ENCODE measurements at regions of chr2 and their contacts with region 1.

Region 1: GRCh38 chr2:200901459-200902072 is 12.4 kb downstream of the NIF3L1 start:
- DNase-seq: peak; percentile 71
- H3K4me3 ChIP-seq: no peak overlapping the region
- H3K27ac ChIP-seq: no peak overlapping the region
- H3K4me1 ChIP-seq: no peaks in the 10 kb centered on the region
- H3K27me3 ChIP-seq: no peaks in the 10 kb centered on the region
- CTCF ChIP-seq: peak; percentile 80

Region 2: GRCh38 chr2:200274116-200275075 is 627.2 kb before region 1 on chr2:
- intact Hi-C with region 1: no loop called
- DNase-seq: no peak
- H3K4me3 ChIP-seq: no peak overlapping the region
- H3K27ac ChIP-seq: no peak overlapping the region
- H3K4me1 ChIP-seq: no peaks in the 10 kb centered on the region
- H3K27me3 ChIP-seq: no peaks in the 10 kb centered on the region
- CTCF ChIP-seq: no peak

Region 3: GRCh38 chr2:200703127-200703925 is 198.2 kb before region 1 on chr2:
- intact Hi-C with region 1: no loop called
- DNase-seq: peak; percentile 52
- H3K4me3 ChIP-seq: no peak overlapping the region
- H3K27ac ChIP-seq: no peak overlapping the region
- H3K4me1 ChIP-seq: no peaks in the 10 kb centered on the region
- H3K27me3 ChIP-seq: no peaks in the 10 kb centered on the region
- CTCF ChIP-seq: peak; percentile 38

Region 4: DNA sequence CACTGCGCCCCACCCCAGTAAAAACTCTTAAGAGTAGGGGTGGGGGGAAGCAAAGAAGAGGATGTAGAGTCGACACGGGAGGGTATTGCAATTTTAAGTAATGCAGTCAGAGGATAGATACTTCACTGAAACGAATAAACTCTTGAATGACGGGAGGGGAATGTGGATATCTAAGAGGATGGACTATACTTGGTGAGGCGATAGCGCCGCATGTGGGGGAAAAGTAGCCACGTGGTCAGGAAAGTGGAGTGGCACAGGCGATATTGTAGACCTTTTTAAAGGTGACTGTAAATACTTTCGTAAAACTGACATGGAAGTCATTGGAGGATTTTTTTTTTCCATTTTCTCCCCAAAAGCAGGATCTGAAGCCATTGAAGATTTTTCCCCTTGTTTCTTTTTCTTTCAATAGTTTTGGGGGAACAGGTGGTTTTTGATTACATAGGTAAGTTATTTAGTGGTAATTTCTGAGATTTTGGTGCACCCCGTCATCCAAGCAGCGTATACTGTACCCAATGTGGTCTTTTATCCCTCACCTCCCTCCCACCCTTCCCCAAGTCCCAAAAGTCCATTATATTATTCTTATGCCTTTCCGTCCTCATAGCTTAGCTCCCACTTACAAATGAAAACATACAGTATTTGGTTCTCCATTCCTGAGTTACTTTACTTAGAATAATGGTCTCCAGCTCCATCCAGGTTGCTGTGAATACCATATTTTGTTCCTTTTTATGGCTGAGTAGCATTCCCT is 50.9 kb before region 1 on chr2:
- intact Hi-C with region 1: no loop called
- DNase-seq: no peak
- H3K4me3 ChIP-seq: no peak overlapping the region
- H3K27ac ChIP-seq: no peak overlapping the region
- H3K4me1 ChIP-seq: no peaks in the 10 kb centered on the region
- H3K27me3 ChIP-seq: no peaks in the 10 kb centered on the region
- CTCF ChIP-seq: no peak

Region 5: DNA sequence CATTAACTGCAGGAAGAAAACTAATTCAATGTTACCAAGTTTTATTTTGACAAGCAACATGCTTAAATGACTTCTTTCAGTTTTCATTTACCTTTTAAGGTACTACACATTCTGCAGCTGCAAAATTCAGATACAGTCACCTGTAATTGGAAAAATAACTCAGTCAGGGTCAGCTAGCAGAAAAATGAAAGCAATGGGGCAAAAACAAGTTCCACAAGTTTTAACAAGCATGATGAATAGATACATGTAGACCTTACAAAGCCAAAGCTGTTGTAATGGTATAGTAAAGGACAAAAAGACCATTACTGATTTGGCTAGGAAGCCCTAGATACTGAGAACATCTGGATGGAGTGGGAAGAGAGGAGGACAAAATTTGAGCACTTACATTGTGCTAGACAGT is 57.7 kb after region 1 on chr2:
- intact Hi-C with region 1: loop called (anchors 5 kb)
- DNase-seq: no peak
- H3K4me3 ChIP-seq: no peak overlapping the region
- H3K27ac ChIP-seq: no peak overlapping the region
- H3K4me1 ChIP-seq: peaks cover 11% of the 10 kb centered on the region
- H3K27me3 ChIP-seq: no peaks in the 10 kb centered on the region
- CTCF ChIP-seq: no peak

Region 6: GRCh38 chr2:201064797-201065329 is 163.3 kb after region 1 on chr2:
- intact Hi-C with region 1: loop called (anchors 5 kb)
- DNase-seq: no peak
- H3K4me3 ChIP-seq: no peak overlapping the region
- H3K27ac ChIP-seq: peak overlapping the region; percentile 51
- H3K4me1 ChIP-seq: peaks cover 6% of the 10 kb centered on the region
- H3K27me3 ChIP-seq: no peaks in the 10 kb centered on the region
- CTCF ChIP-seq: no peak

Region 7: GRCh38 chr2:201164166-201164565 is 262.6 kb after region 1 on chr2:
- intact Hi-C with region 1: loop called (anchors 5 kb)
- DNase-seq: no peak
- H3K4me3 ChIP-seq: no peak overlapping the region
- H3K27ac ChIP-seq: no peak overlapping the region
- H3K4me1 ChIP-seq: no peaks in the 10 kb centered on the region
- H3K27me3 ChIP-seq: no peaks in the 10 kb centered on the region
- CTCF ChIP-seq: no peak

Region 8: DNA sequence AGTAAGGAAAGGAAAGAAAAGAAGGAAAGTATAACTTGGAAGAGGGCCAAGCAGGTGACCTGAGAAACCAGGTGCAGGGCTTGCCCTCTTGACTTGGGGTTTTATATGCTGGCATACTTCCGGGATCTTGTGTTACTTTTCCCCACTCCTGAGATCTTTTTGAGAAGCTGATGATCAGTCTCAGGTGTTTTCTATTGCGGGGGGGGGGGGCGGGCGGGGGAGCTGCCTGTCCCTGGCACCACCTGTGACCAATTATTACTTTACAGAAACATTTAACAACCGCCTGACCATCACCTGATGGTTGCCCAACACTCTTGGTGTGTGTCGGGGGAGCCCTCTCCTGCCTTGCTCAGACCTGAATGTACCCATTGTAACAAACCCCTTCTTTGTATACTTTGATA is 274.5 kb after region 1 on chr2:
- intact Hi-C with region 1: loop called (anchors 5 kb)
- DNase-seq: peak; percentile 68
- H3K4me3 ChIP-seq: no peak overlapping the region
- H3K27ac ChIP-seq: peak overlapping the region; percentile 66
- H3K4me1 ChIP-seq: no peaks in the 10 kb centered on the region
- H3K27me3 ChIP-seq: no peaks in the 10 kb centered on the region
- CTCF ChIP-seq: no peak

Region 9: GRCh38 chr2:201194097-201194496 is 292.5 kb after region 1 on chr2:
- intact Hi-C with region 1: no loop called
- DNase-seq: no peak
- H3K4me3 ChIP-seq: no peak overlapping the region
- H3K27ac ChIP-seq: peak overlapping the region; percentile 13
- H3K4me1 ChIP-seq: peaks cover 3% of the 10 kb centered on the region
- H3K27me3 ChIP-seq: no peaks in the 10 kb centered on the region
- CTCF ChIP-seq: no peak

Measured in colonic mucosa (tissue), 4 donors.